Activated CD4-positive, alpha-beta T cell treated with anti-CD3 and anti-CD28 coated beads for 36 hours (primary cell): ENCODE measurements at regions of chr19 and their contacts with region 1.

Region 1: GRCh38 chr19:35352448-35353304 is 5.0 kb downstream of the FFAR1 start:
- DNase-seq: peak; percentile 87
- ATAC-seq: peak; percentile 77
- H3K4me3 Mint-ChIP-seq: no peak overlapping the region
- H3K27ac Mint-ChIP-seq: peak overlapping the region; percentile 72
- H3K4me1 Mint-ChIP-seq: peaks cover 24% of the 10 kb centered on the region
- H3K27me3 Mint-ChIP-seq: no peaks in the 10 kb centered on the region

Region 2: DNA sequence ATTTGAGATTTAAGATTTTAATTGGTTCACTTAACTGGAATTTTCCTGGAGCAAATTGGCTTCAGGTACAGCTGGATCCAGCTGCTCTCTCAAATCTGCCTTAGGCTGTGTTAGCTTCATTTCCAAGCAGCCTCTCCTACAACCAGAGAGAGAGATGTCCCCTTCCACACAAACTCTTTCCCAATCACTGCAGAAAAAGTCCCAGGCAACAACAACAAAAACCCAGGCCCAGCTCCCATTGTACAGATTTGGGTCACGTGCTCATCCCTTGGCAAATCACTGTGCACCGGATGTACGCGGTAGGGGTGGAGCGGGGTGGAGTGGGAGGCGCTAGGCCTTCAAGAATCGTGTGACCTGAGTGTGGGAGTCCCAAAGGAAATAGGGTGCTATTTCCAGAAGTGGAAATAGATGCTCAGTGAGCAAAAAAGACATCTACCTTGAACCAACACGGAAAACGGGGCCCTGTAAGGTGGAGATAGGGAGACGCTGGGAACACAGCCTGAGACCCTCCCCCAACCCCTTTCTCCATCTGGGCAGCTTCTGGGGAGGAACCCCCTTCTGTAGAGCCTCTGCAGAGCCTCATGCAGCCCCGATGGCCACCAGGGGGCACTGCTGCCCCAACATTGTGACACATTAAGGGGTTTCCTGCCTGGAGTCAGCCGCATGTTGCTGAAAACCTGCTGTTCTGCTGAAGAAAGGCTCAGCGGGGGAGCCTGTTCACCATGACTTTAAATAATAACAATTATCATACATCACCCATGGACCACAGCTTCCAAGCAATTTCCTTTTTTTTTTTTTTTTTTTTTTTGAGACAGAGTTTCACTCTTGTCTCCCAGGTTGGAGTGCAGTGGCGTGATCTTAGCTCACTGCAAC is 285.7 kb before region 1 on chr19:
- CTCF ChIA-PET with region 1: no interaction called
- POLR2A ChIA-PET with region 1: no interaction called
- intact Hi-C with region 1: no loop called
- DNase-seq: peak; percentile 96
- ATAC-seq: peak; percentile 89
- H3K4me3 Mint-ChIP-seq: peak overlapping the region; percentile 39
- H3K27ac Mint-ChIP-seq: peak overlapping the region; percentile 62
- H3K4me1 Mint-ChIP-seq: peaks cover 17% of the 10 kb centered on the region
- H3K27me3 Mint-ChIP-seq: no peaks in the 10 kb centered on the region

Region 3: DNA sequence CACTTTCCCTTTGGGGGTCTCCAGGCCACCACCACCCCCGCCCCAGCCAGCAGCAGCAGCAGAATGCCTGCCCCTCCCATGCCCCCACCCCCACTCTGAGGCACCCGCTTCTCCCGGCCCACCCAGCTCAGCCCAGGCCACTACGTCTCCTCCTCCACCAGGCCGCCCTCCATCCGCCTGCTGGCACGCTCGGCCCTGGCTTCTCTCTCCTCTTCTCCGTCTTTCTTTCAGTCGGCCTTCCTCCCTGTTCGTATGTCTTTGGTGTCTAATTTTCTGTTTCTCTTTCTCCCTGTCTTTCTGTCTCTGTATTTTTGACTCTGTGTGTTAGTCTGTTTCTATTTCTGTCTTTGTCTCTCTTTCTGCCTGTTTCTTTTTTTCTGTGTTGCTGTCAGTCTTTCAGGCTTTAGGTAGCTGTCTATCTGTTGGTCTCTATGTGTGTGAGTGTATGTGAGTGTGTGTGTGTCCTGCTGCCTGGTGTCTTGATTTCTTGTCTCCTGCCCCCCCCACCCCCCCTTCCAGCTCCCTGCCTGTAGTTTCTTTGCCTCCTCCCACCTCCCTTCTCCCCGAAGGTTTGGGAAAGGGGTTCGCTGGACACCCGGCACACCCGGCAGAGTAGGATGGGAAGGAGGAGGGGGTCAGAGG is 218.0 kb before region 1 on chr19 and contains the start of gene LGI4:
- CTCF ChIA-PET with region 1: no interaction called
- POLR2A ChIA-PET with region 1: no interaction called
- intact Hi-C with region 1: no loop called
- DNase-seq: no peak
- ATAC-seq: no peak
- H3K4me3 Mint-ChIP-seq: no peak within 1 kb of the TSS
- H3K27ac Mint-ChIP-seq: no peak within 1 kb of the TSS
- H3K4me1 Mint-ChIP-seq: peaks cover 4% of the 10 kb centered on the region
- H3K27me3 Mint-ChIP-seq: no peaks in the 10 kb centered on the region
- total RNA-seq, gene LGI4: 0.66 to 0.67 TPM

Region 4: DNA sequence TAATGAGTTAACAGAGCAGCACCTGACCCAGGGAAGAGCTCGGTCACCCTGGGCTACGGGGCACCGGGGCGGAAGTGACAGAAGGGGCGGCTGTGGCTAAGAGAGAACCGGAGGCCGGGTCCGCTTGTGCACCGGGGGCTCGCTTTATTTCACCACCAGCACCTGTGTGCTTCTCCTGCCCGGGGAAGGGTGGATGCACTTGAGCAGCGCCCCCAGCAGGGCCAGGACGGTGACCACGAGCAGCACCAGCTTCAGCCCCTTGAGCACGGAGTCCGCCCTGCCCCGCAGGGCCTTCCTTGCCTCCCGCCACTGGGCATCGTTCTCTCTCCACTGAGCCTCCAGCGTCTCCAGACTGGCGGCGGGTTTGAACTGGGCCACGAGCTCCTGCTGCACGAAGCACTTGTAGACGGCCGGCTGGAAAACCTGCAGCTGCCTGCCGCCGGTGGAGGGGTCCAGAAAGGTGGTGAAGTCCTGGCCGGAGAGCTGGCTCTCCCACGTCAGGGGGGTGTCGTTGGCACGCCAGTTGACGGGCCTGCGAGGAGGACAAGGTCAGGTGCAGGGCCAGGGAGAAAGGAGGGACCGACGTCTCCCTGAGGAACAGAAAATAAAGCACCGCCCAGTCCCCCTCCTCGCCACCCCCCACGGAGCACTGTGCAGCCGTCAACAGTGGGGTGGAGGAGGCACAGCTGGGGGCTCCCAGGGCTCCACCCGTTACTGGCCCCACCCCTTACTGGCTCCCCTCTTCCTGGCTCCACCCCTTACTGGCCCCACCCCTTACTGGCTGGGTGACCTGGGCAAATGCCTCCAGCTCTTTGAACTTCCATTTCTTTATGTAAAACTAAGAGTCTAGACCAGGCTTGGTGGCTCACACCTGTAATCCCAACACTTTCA is 127.8 kb before region 1 on chr19:
- CTCF ChIA-PET with region 1: no interaction called
- POLR2A ChIA-PET with region 1: no interaction called
- intact Hi-C with region 1: no loop called
- DNase-seq: no peak
- ATAC-seq: peak; percentile 64
- H3K4me3 Mint-ChIP-seq: no peak overlapping the region
- H3K27ac Mint-ChIP-seq: no peak overlapping the region
- H3K4me1 Mint-ChIP-seq: peaks cover 11% of the 10 kb centered on the region
- H3K27me3 Mint-ChIP-seq: no peaks in the 10 kb centered on the region

Region 5: GRCh38 chr19:35417713-35418534 is 65.2 kb after region 1 on chr19:
- CTCF ChIA-PET with region 1: interaction called, 11 read pairs
- POLR2A ChIA-PET with region 1: no interaction called
- intact Hi-C with region 1: no loop called
- DNase-seq: no peak
- ATAC-seq: no peak
- H3K4me3 Mint-ChIP-seq: no peak overlapping the region
- H3K27ac Mint-ChIP-seq: no peak overlapping the region
- H3K4me1 Mint-ChIP-seq: no peaks in the 10 kb centered on the region
- H3K27me3 Mint-ChIP-seq: peaks cover 15% of the 10 kb centered on the region

Region 6: GRCh38 chr19:35436477-35437405 is 84.1 kb after region 1 on chr19:
- CTCF ChIA-PET with region 1: no interaction called
- POLR2A ChIA-PET with region 1: no interaction called
- intact Hi-C with region 1: no loop called
- DNase-seq: peak; percentile 49
- ATAC-seq: peak; percentile 95
- H3K4me3 Mint-ChIP-seq: no peak overlapping the region
- H3K27ac Mint-ChIP-seq: peak overlapping the region; percentile 67
- H3K4me1 Mint-ChIP-seq: peaks cover 13% of the 10 kb centered on the region
- H3K27me3 Mint-ChIP-seq: peaks cover 14% of the 10 kb centered on the region

Region 7: DNA sequence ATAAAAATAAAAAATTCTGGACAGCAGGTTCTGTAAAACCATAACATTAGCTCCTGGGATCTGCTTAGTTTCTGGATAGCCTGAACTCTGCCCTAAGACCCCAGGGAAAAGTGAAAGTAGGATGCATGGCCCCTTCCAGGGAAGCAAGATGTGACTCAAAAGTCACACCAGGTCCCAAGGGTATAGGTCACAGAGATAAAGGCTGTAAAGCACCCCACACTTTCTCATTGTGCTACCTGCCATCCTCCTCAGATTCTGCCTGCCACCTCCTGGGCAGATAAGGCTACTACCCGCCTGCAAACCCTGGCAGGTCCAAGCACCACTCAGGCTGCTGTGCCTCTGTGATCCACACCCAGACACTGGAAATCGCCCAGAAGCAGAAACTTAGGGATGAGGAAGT is 116.0 kb after region 1 on chr19:
- CTCF ChIA-PET with region 1: interaction called, 54 read pairs
- POLR2A ChIA-PET with region 1: interaction called, 3 read pairs
- intact Hi-C with region 1: loop called (anchors 1 kb)
- DNase-seq: peak; percentile 81
- ATAC-seq: peak; percentile 100
- H3K4me3 Mint-ChIP-seq: no peak overlapping the region
- H3K27ac Mint-ChIP-seq: no peak overlapping the region
- H3K4me1 Mint-ChIP-seq: peaks cover 7% of the 10 kb centered on the region
- H3K27me3 Mint-ChIP-seq: no peaks in the 10 kb centered on the region

Region 8: GRCh38 chr19:35495107-35496064 is 142.7 kb after region 1 on chr19:
- CTCF ChIA-PET with region 1: interaction called, 34 read pairs
- POLR2A ChIA-PET with region 1: no interaction called
- intact Hi-C with region 1: loop called (anchors 1 kb)
- DNase-seq: peak; percentile 91
- ATAC-seq: peak; percentile 97
- H3K4me3 Mint-ChIP-seq: no peak overlapping the region
- H3K27ac Mint-ChIP-seq: peak overlapping the region; percentile 43
- H3K4me1 Mint-ChIP-seq: peaks cover 5% of the 10 kb centered on the region
- H3K27me3 Mint-ChIP-seq: peaks cover 6% of the 10 kb centered on the region

Region 9: DNA sequence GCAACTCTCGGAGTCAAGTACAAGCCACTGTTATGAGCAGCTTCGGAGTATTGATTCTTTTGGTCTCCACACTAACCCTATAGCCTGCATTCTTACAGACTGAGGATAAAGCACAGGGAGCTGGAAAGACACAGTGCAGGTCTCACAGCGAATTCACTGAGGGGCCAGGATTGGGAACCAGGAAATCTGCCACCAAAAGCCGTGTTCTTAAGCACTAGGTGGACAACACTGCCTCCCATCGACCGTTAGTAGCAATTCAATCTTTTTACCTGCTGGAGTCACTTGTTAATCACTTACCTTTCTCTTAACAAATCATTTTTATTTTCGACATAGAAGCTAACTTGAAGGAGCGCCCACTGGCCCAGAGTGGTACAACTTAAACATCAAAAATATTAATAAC is 239.6 kb after region 1 on chr19:
- CTCF ChIA-PET with region 1: interaction called, 3 read pairs
- POLR2A ChIA-PET with region 1: no interaction called
- intact Hi-C with region 1: loop called in 1 of 2 experiments (anchors 5 kb)
- DNase-seq: peak; percentile 49
- ATAC-seq: no peak
- H3K4me3 Mint-ChIP-seq: no peak overlapping the region
- H3K27ac Mint-ChIP-seq: no peak overlapping the region
- H3K4me1 Mint-ChIP-seq: peaks cover 4% of the 10 kb centered on the region
- H3K27me3 Mint-ChIP-seq: peaks cover 4% of the 10 kb centered on the region

Region 10: DNA sequence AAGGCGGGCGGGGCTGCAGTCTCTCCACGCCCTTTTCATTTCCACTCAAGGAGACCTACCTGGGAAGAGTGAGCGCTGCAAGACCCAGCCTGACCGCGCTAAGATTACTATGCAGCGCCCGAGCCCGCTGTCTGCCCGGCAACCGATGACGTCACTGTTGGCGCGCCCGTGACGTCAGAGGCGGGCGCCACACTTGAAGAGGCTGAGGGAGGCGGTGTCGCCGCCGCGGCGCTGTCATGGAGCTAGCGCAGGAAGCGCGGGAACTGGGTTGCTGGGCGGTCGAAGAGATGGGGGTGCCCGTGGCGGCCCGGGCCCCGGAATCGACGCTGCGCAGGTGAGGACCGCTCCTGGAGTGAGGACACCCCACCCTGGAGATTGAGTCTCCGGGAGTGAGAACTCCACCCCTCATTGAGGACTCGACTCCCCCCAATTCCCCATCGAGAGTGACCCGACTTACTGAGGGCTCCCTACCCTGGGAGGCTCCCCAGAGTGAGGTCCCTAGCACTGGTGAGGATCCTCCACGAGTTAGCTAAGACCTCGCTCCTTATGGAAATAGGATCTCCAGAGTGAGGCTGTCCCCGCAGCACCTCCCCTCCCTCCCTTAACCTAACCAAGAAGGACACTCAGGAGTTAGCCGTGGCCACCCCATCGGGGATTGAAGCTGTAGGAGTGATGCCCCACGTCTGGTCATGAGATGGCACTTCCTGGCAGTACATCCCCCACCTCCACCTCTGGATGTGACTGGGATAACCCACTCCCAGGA is 260.1 kb after region 1 on chr19 and contains the start of gene HAUS5:
- CTCF ChIA-PET with region 1: no interaction called
- POLR2A ChIA-PET with region 1: no interaction called
- intact Hi-C with region 1: loop called in 1 of 2 experiments (anchors 5 kb)
- DNase-seq: peak; percentile 98
- ATAC-seq: peak; percentile 96
- H3K4me3 Mint-ChIP-seq: peak within 1 kb of the TSS; percentile 81
- H3K27ac Mint-ChIP-seq: peak within 1 kb of the TSS; percentile 90
- H3K4me1 Mint-ChIP-seq: peaks cover 23% of the 10 kb centered on the region
- H3K27me3 Mint-ChIP-seq: no peaks in the 10 kb centered on the region
- total RNA-seq, gene HAUS5: 39.7 to 41.0 TPM